Activated CD8-positive, alpha-beta memory T cell treated with anti-CD3 and anti-CD28 coated beads, Interleukin-2, amount 10 ng/mL, durations not matched to agents 7 days and 5 days (primary cell): ENCODE measurements at regions of chr9 and their contacts with region 1.

Region 1: GRCh38 chr9:127943731-127944144 is 6.1 kb upstream of the DPM2 start:
- DNase-seq: peak; percentile 86
- ATAC-seq: peak; percentile 77
- H3K4me3 Mint-ChIP-seq: no peak overlapping the region
- H3K27ac Mint-ChIP-seq: no peak overlapping the region
- H3K4me1 Mint-ChIP-seq: peaks cover 15% of the 10 kb centered on the region
- H3K27me3 Mint-ChIP-seq: no peaks in the 10 kb centered on the region

Region 2: GRCh38 chr9:127899128-127899946 is 44.4 kb before region 1 on chr9 and contains the start of gene ST6GALNAC6:
- CTCF ChIA-PET with region 1: no interaction called
- DNase-seq: peak; percentile 79
- ATAC-seq: peak; percentile 80
- H3K4me3 Mint-ChIP-seq: peak within 1 kb of the TSS; percentile 80
- H3K27ac Mint-ChIP-seq: peak within 1 kb of the TSS; percentile 78
- H3K4me1 Mint-ChIP-seq: peaks cover 40% of the 10 kb centered on the region
- H3K27me3 Mint-ChIP-seq: no peaks in the 10 kb centered on the region
- total RNA-seq, gene ST6GALNAC6: 75.7 to 93.5 TPM

Region 3: DNA sequence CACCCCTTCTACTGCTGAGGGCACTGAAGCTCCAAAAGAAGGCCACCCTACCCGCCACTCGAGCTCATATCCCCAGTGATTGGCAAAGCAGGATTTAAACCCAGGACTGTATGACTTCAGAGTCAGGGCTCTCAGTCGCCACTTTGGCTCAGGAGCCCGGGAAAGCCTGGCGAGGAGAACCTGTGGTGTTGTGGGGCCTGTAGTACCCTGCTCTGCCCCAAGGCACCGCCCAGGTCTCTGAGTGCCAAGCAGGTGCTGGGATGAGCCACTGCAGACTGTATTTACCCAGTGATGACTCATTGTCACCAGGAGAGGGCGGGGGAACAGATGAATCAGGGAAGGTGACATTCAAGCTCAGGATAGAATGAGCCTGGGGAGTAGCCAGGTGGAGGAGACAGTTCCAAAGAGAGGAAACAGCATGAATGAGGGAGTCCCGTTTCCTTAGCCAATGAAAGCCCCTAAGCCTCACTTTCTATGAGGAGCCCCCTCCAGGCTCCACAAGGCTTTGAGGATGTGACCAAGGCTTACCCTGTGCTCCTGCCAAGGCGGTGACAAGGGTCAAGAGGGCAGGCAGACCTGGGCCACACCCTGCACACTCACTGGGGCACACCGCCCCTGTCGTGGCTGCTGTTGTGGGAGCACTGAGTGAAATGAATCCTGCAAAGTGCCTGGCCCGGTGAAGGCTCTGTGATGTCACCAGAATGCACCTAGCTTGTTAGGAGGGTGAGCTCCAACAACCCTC is 11.7 kb after region 1 on chr9:
- CTCF ChIA-PET with region 1: interaction called, 100 read pairs
- DNase-seq: peak; percentile 85
- ATAC-seq: peak; percentile 96
- H3K4me3 Mint-ChIP-seq: no peak overlapping the region
- H3K27ac Mint-ChIP-seq: peak overlapping the region; percentile 8
- H3K4me1 Mint-ChIP-seq: peaks cover 54% of the 10 kb centered on the region
- H3K27me3 Mint-ChIP-seq: no peaks in the 10 kb centered on the region

Region 4: GRCh38 chr9:127970401-127971313 is 26.9 kb after region 1 on chr9:
- CTCF ChIA-PET with region 1: interaction called, 23 read pairs
- DNase-seq: peak; percentile 92
- ATAC-seq: peak; percentile 85
- H3K4me3 Mint-ChIP-seq: peak overlapping the region; percentile 68
- H3K27ac Mint-ChIP-seq: peak overlapping the region; percentile 90
- H3K4me1 Mint-ChIP-seq: peaks cover 89% of the 10 kb centered on the region
- H3K27me3 Mint-ChIP-seq: no peaks in the 10 kb centered on the region

Region 5: GRCh38 chr9:128020692-128021091 is 77.0 kb after region 1 on chr9:
- CTCF ChIA-PET with region 1: interaction called, 347 read pairs
- DNase-seq: no peak
- ATAC-seq: no peak
- H3K4me3 Mint-ChIP-seq: no peak overlapping the region
- H3K27ac Mint-ChIP-seq: no peak overlapping the region
- H3K4me1 Mint-ChIP-seq: peaks cover 47% of the 10 kb centered on the region
- H3K27me3 Mint-ChIP-seq: peaks cover 6% of the 10 kb centered on the region